PC-9 (cell line): ENCODE measurements at regions of chr17 and their contacts with region 1.

Region 1: DNA sequence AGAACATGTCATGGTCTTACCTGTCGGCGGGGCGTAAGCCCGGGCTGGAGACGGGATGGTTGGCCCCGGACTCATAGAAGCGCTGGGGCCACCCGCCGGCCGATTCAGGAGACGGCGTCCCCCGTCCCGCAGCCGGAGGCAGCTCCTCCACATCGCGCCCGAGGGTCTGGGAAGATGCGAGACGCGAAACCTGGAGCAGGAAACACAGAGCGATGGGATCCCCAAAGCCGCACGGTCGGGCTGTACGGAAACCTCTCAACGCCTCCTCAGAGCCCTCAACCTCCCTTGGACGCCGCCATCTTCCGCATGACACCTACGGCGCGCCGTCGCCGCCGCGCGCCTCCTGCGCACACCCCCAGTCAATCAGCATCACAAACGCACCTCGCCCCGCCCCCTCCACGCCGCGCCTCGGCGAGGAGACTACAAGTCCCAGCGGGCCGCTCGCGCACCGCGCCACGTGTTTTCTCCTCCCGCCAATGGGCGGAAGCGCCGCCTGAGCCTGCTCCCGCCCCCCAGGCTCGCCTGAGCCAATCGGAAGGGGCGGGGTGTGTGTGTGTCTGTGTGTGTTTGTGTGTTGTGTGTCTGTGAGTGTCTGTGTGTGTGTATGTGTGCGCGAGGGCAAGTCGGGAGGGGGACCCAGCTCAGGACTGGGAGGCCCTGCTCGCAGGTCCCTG is at the starts of genes ATPAF2 and GID4:
- DNase-seq: peak; percentile 94 to 100
- H3K4me3 ChIP-seq: peak within 1 kb of the TSS; percentile 92
- H3K27ac ChIP-seq: no peak within 1 kb of the TSS
- H3K4me1 ChIP-seq: peaks cover 36% of the 10 kb centered on the region
- H3K27me3 ChIP-seq: no peaks in the 10 kb centered on the region
- CTCF ChIP-seq: no peak
- total RNA-seq, gene ATPAF2: 44.5 and 61.7 TPM in 2 replicates
- total RNA-seq, gene GID4: 16.9 and 19.0 TPM in 2 replicates

Region 2: GRCh38 chr17:17297217-17297616 is 741.8 kb before region 1 on chr17:
- CTCF ChIA-PET with region 1: interaction called, 13 read pairs
- POLR2A ChIA-PET with region 1: no interaction called
- intact Hi-C with region 1: no loop called
- DNase-seq: no peak
- H3K4me3 ChIP-seq: no peak overlapping the region
- H3K27ac ChIP-seq: no peak overlapping the region
- H3K4me1 ChIP-seq: no peaks in the 10 kb centered on the region
- H3K27me3 ChIP-seq: no peaks in the 10 kb centered on the region
- CTCF ChIP-seq: no peak

Region 3: GRCh38 chr17:17823433-17824118 is 215.4 kb before region 1 on chr17:
- CTCF ChIA-PET with region 1: no interaction called
- POLR2A ChIA-PET with region 1: no interaction called
- intact Hi-C with region 1: loop called (anchors 5 kb)
- DNase-seq: peak; percentile 78 to 96
- H3K4me3 ChIP-seq: peak overlapping the region; percentile 52
- H3K27ac ChIP-seq: peak overlapping the region; percentile 95
- H3K4me1 ChIP-seq: peaks cover 97% of the 10 kb centered on the region
- H3K27me3 ChIP-seq: no peaks in the 10 kb centered on the region
- CTCF ChIP-seq: no peak

Region 4: GRCh38 chr17:18087610-18088491 is 48.9 kb after region 1 on chr17 and contains the start of gene DRG2:
- CTCF ChIA-PET with region 1: no interaction called
- POLR2A ChIA-PET with region 1: no interaction called
- intact Hi-C with region 1: loop called (anchors 2 kb)
- DNase-seq: peak; percentile 77 to 97
- H3K4me3 ChIP-seq: peak within 1 kb of the TSS; percentile 94
- H3K27ac ChIP-seq: peak within 1 kb of the TSS; percentile 38
- H3K4me1 ChIP-seq: peaks cover 10% of the 10 kb centered on the region
- H3K27me3 ChIP-seq: no peaks in the 10 kb centered on the region
- CTCF ChIP-seq: no peak; the same call in 1 of the 2 replicates
- total RNA-seq, gene DRG2: 62.4 and 66.9 TPM in 2 replicates